ENCODE measurements at regions of chr3 and their contacts with region 1.

Region 1: GRCh38 chr3:30578479-30578878 is 27.9 kb upstream of the TGFBR2 start:
- DNase-seq: peak; percentile 89
- H3K4me3 Mint-ChIP-seq: no peak overlapping the region
- H3K27ac Mint-ChIP-seq: peak overlapping the region; percentile 70
- H3K4me1 Mint-ChIP-seq: peaks cover 20% of the 10 kb centered on the region
- H3K27me3 Mint-ChIP-seq: no peaks in the 10 kb centered on the region
- CTCF ChIP-seq: no peak

Region 2: DNA sequence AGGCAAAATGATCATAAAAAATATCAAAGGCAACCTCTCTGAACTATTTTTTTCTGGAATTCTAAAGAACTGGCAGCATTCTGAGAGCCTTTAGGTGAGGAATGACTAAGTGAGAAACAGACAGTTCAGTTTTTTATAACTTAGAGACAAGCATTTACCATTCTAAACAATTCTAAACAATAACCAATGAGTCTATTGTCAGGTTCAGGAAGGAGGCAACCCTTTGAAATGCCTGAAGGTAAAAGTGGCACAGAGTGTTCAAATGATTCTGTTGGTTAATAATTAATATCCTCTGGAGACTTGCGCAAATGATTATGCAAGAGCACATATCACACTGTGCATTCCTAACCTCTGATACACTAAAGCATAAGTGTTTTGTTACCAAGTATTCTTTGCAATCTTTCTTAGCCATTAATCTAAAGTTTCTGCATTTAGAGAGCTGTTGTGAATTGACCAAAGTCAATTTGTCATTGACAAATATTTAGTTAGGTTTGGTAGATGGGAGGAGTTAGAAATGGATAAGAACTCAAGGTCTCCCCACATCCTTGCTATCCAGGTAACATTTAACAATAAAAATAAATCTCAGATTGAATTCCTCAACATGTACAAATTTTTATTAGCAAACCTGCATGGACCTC is 18.8 kb after region 1 on chr3:
- CTCF ChIA-PET with region 1: no interaction called
- POLR2A ChIA-PET with region 1: interaction called, 10 read pairs
- intact Hi-C with region 1: no loop called
- DNase-seq: peak; percentile 95
- H3K4me3 Mint-ChIP-seq: no peak overlapping the region
- H3K27ac Mint-ChIP-seq: peak overlapping the region; percentile 96
- H3K4me1 Mint-ChIP-seq: peaks cover 26% of the 10 kb centered on the region
- H3K27me3 Mint-ChIP-seq: no peaks in the 10 kb centered on the region
- CTCF ChIP-seq: no peak

Measured in MCF 10A (cell line).